ENCODE measurements at regions of chr20 and their contacts with region 1.

Region 1: GRCh38 chr20:64119681-64120341 is 12.4 kb upstream of the NPBWR2 start:
- DNase-seq: peak in 1 of 2 donors; percentile 54
- H3K4me3 ChIP-seq: no peak overlapping the region
- H3K27ac ChIP-seq: no peak overlapping the region
- H3K4me1 ChIP-seq: peaks cover 0 to 9% (median 5%) of the 10 kb centered on the region in 4 donors
- H3K27me3 ChIP-seq: peaks cover 0 to 31% of the 10 kb centered on the region in 2 donors
- CTCF ChIP-seq: no peak

Region 2: GRCh38 chr20:64038565-64039292 is 81.1 kb before region 1 on chr20:
- intact Hi-C with region 1: loop called (anchors 2 kb)
- DNase-seq: peak; percentile 55 to 76
- H3K4me3 ChIP-seq: peak overlapping the region; percentile 31 to 51
- H3K27ac ChIP-seq: no peak overlapping the region
- H3K4me1 ChIP-seq: peaks cover 0 to 47% (median 29%) of the 10 kb centered on the region in 4 donors
- H3K27me3 ChIP-seq: peaks cover 3 to 81% of the 10 kb centered on the region in 2 donors
- CTCF ChIP-seq: peak; percentile 61 to 68